AG04449 (cell line): ENCODE measurements at regions of chr9 and their contacts with region 1.

Region 1: GRCh38 chr9:135500525-135501358 is at the start of gene MRPS2:
- DNase-seq: no peak
- H3K4me3 ChIP-seq: peak within 1 kb of the TSS; percentile 80
- CTCF ChIP-seq: peak; percentile 99

Region 2: DNA sequence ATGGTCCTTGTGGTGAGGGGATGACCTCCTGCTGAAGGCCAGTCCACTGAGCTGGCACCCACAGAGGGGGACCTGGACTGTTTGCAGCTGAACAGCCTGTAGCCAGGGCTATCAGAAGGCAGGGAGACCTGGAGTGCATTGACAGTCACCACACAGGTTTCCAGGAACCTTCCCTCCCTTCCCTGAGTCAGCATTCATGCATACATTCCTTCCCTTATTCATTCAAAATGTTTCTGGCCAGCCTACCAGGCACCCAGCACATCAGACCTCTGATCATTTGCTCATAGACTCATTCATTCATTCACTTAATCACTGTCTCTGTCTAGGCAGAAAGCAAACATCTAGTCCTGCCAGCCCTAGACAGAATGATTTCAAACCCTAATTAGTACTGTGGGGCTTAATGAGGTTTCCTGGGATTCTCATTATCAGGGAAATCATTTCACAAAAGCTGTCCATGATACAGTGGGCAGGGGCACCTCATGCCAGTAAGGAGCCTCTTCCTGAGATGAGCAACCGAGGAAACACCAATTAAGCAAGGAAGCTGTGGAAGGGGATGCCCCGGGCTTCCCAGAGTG is 131.2 kb before region 1 on chr9:
- CTCF ChIA-PET with region 1: no interaction called
- POLR2A ChIA-PET with region 1: no interaction called
- DNase-seq: no peak
- H3K4me3 ChIP-seq: no peak overlapping the region
- CTCF ChIP-seq: no peak

Region 3: DNA sequence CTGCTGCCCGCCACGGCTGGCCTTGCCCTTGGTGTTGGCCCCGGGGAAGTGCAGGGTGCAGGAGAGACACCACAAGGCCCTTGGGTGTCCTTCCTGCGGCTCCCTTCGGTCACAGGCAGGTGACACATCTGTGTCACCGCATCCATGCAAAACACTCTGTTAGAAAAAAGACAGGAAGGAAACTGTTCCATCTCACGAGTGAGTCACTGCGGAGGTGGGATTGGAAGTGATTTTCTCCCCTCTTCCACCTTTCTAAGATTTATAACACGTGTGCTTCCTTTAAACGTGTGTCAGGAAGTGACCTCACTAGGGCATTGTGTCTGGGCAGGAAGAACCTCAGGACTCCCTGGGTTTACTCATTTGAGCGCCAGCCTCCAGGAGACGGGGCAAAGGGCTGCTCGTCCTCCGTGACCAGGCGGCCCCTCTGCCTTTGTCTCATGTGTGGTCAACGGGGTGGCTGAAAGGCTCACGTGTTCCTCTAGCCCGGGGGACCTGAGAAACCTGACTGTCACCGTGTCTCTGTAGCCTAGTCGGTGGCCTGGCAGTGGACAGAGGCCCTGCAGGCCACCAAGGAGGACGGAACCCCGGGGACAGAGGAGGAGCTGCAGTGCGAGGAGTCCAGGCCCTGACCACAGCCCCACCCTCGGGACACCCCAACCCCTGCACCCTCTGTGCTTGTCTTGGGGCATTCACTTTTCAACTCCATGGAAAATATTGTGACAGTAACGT is 15.6 kb after region 1 on chr9:
- CTCF ChIA-PET with region 1: interaction called, 11 read pairs
- POLR2A ChIA-PET with region 1: no interaction called
- DNase-seq: no peak
- H3K4me3 ChIP-seq: no peak overlapping the region
- CTCF ChIP-seq: no peak

Region 4: GRCh38 chr9:135524130-135524861 is 23.6 kb after region 1 on chr9:
- CTCF ChIA-PET with region 1: interaction called, 17 read pairs
- POLR2A ChIA-PET with region 1: no interaction called
- DNase-seq: no peak
- H3K4me3 ChIP-seq: no peak overlapping the region
- CTCF ChIP-seq: no peak